ENCODE measurements at regions of chr3 and their contacts with region 1.

Region 1: GRCh38 chr3:86766331-86766730 is 224.6 kb downstream of the VGLL3 start:
- DNase-seq: no peak

Region 2: DNA sequence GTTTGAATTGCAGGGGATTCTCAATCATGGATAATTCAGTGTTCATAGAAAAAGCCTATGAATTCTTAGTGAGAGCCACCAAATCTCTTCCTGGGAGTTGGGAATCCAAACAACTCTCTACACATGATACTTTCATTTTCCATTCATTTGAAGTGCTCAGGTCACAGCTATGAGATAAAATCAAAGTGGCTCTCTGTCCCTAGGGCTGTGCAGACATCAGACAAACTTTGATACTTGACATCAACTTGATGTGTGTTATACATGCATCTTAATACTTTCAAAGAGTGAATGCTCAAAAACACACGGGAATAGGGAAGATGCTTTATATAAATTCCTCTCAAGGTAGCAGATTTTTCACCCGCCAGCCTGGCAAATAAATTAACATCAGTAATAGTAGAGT is 385.5 kb after region 1 on chr3:
- intact Hi-C with region 1: loop called in 1 of 2 experiments (anchors 10 kb)
- DNase-seq: no peak

Region 3: GRCh38 chr3:87324609-87325008 is 558.3 kb after region 1 on chr3:
- intact Hi-C with region 1: no loop called
- DNase-seq: peak; percentile 64